Calu3 (cell line): ENCODE measurements at regions of chr3 and their contacts with region 1.

Region 1: GRCh38 chr3:56819016-56819809 is 17.5 kb upstream of the ARHGEF3 start:
- DNase-seq: no peak
- H3K4me3 Mint-ChIP-seq: no peak overlapping the region
- H3K27ac Mint-ChIP-seq: no peak overlapping the region
- H3K4me1 Mint-ChIP-seq: peaks cover 13% of the 10 kb centered on the region
- H3K27me3 Mint-ChIP-seq: no peaks in the 10 kb centered on the region
- CTCF ChIP-seq: no peak

Region 2: GRCh38 chr3:56769116-56769707 is 50.0 kb before region 1 on chr3:
- CTCF ChIA-PET with region 1: no interaction called
- intact Hi-C with region 1: no loop called
- DNase-seq: no peak
- H3K4me3 Mint-ChIP-seq: no peak overlapping the region
- H3K27ac Mint-ChIP-seq: no peak overlapping the region
- H3K4me1 Mint-ChIP-seq: no peaks in the 10 kb centered on the region
- H3K27me3 Mint-ChIP-seq: no peaks in the 10 kb centered on the region
- CTCF ChIP-seq: no peak

Region 3: GRCh38 chr3:56845505-56845904 is 26.3 kb after region 1 on chr3:
- CTCF ChIA-PET with region 1: no interaction called
- intact Hi-C with region 1: loop called (anchors 2 kb)
- DNase-seq: no peak
- H3K4me3 Mint-ChIP-seq: no peak overlapping the region
- H3K27ac Mint-ChIP-seq: no peak overlapping the region
- H3K4me1 Mint-ChIP-seq: no peaks in the 10 kb centered on the region
- H3K27me3 Mint-ChIP-seq: no peaks in the 10 kb centered on the region
- CTCF ChIP-seq: no peak

Region 4: DNA sequence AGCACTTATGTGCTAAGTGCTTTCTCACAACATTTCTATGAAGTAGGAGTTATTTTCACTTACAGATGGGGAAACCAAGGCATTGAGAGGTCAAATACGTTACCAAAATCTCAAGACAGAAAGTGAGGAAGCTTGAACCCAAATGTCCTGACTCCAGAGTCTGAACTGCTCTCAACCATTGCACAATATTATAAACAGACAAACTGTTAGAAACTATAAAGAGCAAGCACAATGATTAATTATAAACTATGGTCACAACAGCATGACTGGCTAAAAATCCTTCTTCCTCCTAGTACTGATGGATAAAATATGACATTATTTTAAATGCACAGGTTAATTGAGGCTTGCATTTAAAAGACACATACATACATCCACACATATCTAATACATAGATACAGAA is 551.1 kb after region 1 on chr3:
- CTCF ChIA-PET with region 1: no interaction called
- intact Hi-C with region 1: no loop called
- DNase-seq: no peak
- H3K4me3 Mint-ChIP-seq: no peak overlapping the region
- H3K27ac Mint-ChIP-seq: no peak overlapping the region
- H3K4me1 Mint-ChIP-seq: no peaks in the 10 kb centered on the region
- H3K27me3 Mint-ChIP-seq: no peaks in the 10 kb centered on the region
- CTCF ChIP-seq: no peak